ENCODE measurements at regions of chr4 and their contacts with region 1.

Region 1: DNA sequence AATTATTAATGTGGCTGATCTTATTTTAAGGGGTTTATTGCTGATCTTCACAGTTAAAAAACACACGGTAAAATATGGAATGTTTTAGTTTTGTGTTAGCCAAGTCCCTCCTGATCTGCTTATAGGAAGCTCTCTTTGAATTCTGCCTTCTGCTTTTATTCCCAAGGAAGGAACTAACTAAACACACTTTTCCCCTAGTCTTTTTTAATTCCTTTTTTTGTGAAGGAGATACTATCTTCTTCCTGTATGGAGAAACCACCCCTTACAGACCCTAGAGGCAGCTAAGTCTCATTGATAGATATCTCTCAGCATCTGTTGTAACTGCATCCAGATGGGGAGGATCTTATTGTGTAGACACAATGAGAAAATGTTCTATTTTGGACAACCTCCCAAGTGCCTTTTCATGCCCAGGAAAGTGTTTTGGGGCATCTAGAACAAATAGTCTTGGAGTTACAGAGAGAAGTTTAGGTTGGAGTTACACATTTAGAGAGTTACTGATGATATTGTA is 64.4 kb downstream of the AFF1 start:
- DNase-seq: no peak
- ATAC-seq: no peak
- H3K4me3 ChIP-seq: no peak overlapping the region
- H3K27ac ChIP-seq: no peak overlapping the region
- H3K4me1 ChIP-seq: peaks cover 8% of the 10 kb centered on the region
- H3K27me3 ChIP-seq: no peaks in the 10 kb centered on the region
- CTCF ChIP-seq: no peak
- POLR2A ChIP-seq: no peak
- RAD21 ChIP-seq: no peak

Region 2: DNA sequence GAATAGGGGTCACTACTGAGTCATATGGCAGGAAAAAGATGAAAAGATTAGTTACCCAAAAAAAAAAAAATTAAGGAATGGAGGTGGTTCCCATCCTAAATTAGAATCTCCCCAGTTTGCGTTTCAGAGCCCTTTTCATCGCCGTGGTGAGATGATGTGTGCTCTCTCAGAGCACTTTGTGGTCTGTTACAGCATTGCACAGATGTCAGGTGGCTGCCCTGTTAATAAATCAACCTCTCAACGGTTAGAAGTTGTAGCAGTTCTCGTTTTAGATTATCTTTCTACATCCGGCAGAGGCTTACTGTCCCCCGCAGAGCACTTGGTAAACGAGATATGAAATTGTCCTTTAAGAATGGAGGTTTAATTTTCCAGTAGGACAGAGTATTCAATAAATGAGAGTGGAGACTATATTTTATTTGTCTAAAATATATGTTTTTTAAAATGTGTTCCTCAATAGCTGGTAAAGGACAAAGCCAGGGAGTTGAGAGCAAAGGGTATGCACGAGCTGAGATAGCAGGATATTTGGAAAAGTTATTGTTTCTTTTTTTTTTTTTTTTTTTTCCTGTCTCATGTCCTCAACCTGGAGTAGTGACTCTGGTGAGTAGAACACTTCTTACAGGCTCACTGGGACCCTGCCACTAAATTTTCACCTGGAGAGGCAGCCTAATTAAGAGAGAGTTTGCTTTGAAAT is 37.4 kb before region 1 on chr4:
- CTCF ChIA-PET with region 1: no interaction called
- POLR2A ChIA-PET with region 1: no interaction called
- dilution Hi-C with region 1: no loop called
- in situ Hi-C with region 1: loop called (anchors 5 kb)
- intact Hi-C with region 1: no loop called
- DNase-seq: peak; percentile 67
- ATAC-seq: no peak
- H3K4me3 ChIP-seq: no peak overlapping the region
- H3K27ac ChIP-seq: no peak overlapping the region
- H3K4me1 ChIP-seq: peaks cover 22% of the 10 kb centered on the region
- H3K27me3 ChIP-seq: no peaks in the 10 kb centered on the region
- CTCF ChIP-seq: no peak
- POLR2A ChIP-seq: no peak
- RAD21 ChIP-seq: no peak

Region 3: GRCh38 chr4:87108142-87108546 is 109.0 kb after region 1 on chr4:
- CTCF ChIA-PET with region 1: no interaction called
- POLR2A ChIA-PET with region 1: no interaction called
- dilution Hi-C with region 1: no loop called
- in situ Hi-C with region 1: no loop called
- intact Hi-C with region 1: no loop called
- DNase-seq: peak; percentile 85
- ATAC-seq: peak; percentile 91
- H3K4me3 ChIP-seq: no peak overlapping the region
- H3K27ac ChIP-seq: peak overlapping the region; percentile 51
- H3K4me1 ChIP-seq: peaks cover 9% of the 10 kb centered on the region
- H3K27me3 ChIP-seq: no peaks in the 10 kb centered on the region
- CTCF ChIP-seq: no peak
- POLR2A ChIP-seq: no peak
- RAD21 ChIP-seq: 0 out of 2 replicates have a peak, but pooled peaks have one; percentile 8

Region 4: GRCh38 chr4:87489678-87490077 is 490.5 kb after region 1 on chr4:
- CTCF ChIA-PET with region 1: no interaction called
- POLR2A ChIA-PET with region 1: no interaction called
- dilution Hi-C with region 1: no loop called
- in situ Hi-C with region 1: no loop called
- intact Hi-C with region 1: no loop called
- DNase-seq: no peak
- ATAC-seq: no peak
- H3K4me3 ChIP-seq: no peak overlapping the region
- H3K27ac ChIP-seq: no peak overlapping the region
- H3K4me1 ChIP-seq: no peaks in the 10 kb centered on the region
- H3K27me3 ChIP-seq: no peaks in the 10 kb centered on the region
- CTCF ChIP-seq: no peak
- POLR2A ChIP-seq: no peak
- RAD21 ChIP-seq: no peak